Activated CD4-positive, alpha-beta T cell treated with anti-CD3 and anti-CD28 coated beads for 36 hours (primary cell): ENCODE measurements at regions of chr19 and their contacts with region 1.

Region 1: GRCh38 chr19:18496167-18496979 is 25.5 kb downstream of the ELL start:
- DNase-seq: peak; percentile 79
- ATAC-seq: peak; percentile 96
- H3K4me3 Mint-ChIP-seq: peak overlapping the region; percentile 45
- H3K27ac Mint-ChIP-seq: peak overlapping the region; percentile 88
- H3K4me1 Mint-ChIP-seq: peaks cover 77% of the 10 kb centered on the region
- H3K27me3 Mint-ChIP-seq: no peaks in the 10 kb centered on the region

Region 2: GRCh38 chr19:18478569-18479311 is 17.6 kb before region 1 on chr19:
- CTCF ChIA-PET with region 1: interaction called, 8 read pairs
- POLR2A ChIA-PET with region 1: interaction called, 5 read pairs
- intact Hi-C with region 1: loop called in 1 of 2 experiments (anchors 2 kb)
- DNase-seq: peak; percentile 89
- ATAC-seq: peak; percentile 92
- H3K4me3 Mint-ChIP-seq: peak overlapping the region; percentile 59
- H3K27ac Mint-ChIP-seq: peak overlapping the region; percentile 95
- H3K4me1 Mint-ChIP-seq: peaks cover 80% of the 10 kb centered on the region
- H3K27me3 Mint-ChIP-seq: no peaks in the 10 kb centered on the region